Activated CD8-positive, alpha-beta T cell treated with anti-CD3 and anti-CD28 coated beads for 36 hours (primary cell): ENCODE measurements at regions of chr12 and their contacts with region 1.

Region 1: GRCh38 chr12:6825398-6826124 is 2.6 kb upstream of the P3H3 start:
- DNase-seq: peak; percentile 89
- ATAC-seq: peak; percentile 70
- H3K4me3 Mint-ChIP-seq: no peak overlapping the region
- H3K27ac Mint-ChIP-seq: no peak overlapping the region
- H3K4me1 Mint-ChIP-seq: peaks cover 30% of the 10 kb centered on the region
- H3K27me3 Mint-ChIP-seq: peaks cover 70% of the 10 kb centered on the region
- CTCF ChIP-seq: peak; percentile 93

Region 2: GRCh38 chr12:6745741-6746525 is 79.6 kb before region 1 on chr12:
- CTCF ChIA-PET with region 1: interaction called, 341 read pairs
- POLR2A ChIA-PET with region 1: interaction called, 4 read pairs
- intact Hi-C with region 1: loop called (anchors 5 kb)
- DNase-seq: peak; percentile 47
- ATAC-seq: peak; percentile 86
- H3K4me3 Mint-ChIP-seq: no peak overlapping the region
- H3K27ac Mint-ChIP-seq: peak overlapping the region; percentile 90
- H3K4me1 Mint-ChIP-seq: peaks cover 38% of the 10 kb centered on the region
- H3K27me3 Mint-ChIP-seq: no peaks in the 10 kb centered on the region
- CTCF ChIP-seq: no peak

Region 3: GRCh38 chr12:6778574-6779550 is 46.7 kb before region 1 on chr12:
- CTCF ChIA-PET with region 1: interaction called, 26 read pairs
- POLR2A ChIA-PET with region 1: interaction called, 4 read pairs
- intact Hi-C with region 1: loop called (anchors 5 kb)
- DNase-seq: peak; percentile 96
- ATAC-seq: peak; percentile 54
- H3K4me3 Mint-ChIP-seq: peak overlapping the region; percentile 89
- H3K27ac Mint-ChIP-seq: peak overlapping the region; percentile 89
- H3K4me1 Mint-ChIP-seq: peaks cover 83% of the 10 kb centered on the region
- H3K27me3 Mint-ChIP-seq: no peaks in the 10 kb centered on the region
- CTCF ChIP-seq: peak; percentile 89

Region 4: DNA sequence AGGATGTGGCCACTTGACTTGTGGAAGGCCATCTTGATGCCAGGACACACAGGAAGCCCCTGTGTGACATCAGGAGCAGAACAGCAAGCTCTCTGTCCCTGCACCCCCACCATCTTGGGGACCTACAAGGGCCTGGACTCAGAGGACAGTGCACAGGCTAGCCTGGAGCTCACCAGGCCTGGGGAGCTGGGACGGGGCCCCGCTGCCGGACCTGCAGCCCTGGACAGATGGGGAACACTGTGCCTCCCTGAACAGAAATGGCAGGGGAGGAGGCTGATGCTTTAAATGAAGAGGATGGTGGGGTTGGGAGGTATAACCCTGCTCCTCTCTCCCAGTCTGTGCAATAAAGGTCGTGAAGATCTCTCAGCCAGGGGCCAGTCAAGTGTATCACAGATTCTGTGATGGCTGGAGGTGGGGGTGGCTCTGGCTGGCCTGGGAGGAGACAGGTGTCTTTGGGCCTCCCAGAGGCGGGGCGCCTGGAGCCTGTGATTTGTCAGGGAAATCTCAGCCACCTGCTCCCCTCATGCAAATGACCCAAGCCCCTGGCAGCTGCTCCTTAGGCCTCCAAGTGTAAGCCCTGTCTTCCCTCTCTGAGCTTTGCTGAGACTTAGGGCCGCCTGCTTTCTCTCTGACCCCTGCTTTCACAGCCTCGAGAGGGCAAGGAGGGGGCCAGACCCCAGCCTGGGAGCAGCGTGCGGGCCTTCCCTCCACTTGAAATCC is 14.1 kb after region 1 on chr12:
- CTCF ChIA-PET with region 1: interaction called, 40 read pairs
- POLR2A ChIA-PET with region 1: interaction called, 4 read pairs
- intact Hi-C with region 1: no loop called
- DNase-seq: no peak
- ATAC-seq: no peak
- H3K4me3 Mint-ChIP-seq: no peak overlapping the region
- H3K27ac Mint-ChIP-seq: no peak overlapping the region
- H3K4me1 Mint-ChIP-seq: peaks cover 5% of the 10 kb centered on the region
- H3K27me3 Mint-ChIP-seq: no peaks in the 10 kb centered on the region
- CTCF ChIP-seq: no peak

Region 5: DNA sequence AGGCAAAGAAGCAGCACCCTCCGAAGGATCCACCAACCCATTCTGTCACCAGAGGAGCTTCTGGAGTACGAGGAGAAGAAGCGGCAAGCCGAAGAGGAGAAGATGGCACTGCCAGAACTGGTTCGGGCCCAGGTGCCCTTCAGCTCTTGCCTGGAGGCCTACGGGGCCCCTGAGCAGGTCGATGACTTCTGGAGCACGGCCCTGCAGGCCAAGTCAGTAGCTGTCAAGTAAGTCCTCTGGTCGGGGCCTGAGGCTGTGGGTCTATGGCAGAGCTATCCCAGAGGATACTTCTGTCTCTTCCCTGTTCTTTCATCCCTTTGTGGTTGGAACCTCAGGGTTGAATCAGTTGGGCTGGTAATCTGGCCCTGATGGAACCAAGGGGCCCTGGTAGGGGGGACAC is 35.8 kb after region 1 on chr12:
- CTCF ChIA-PET with region 1: no interaction called
- POLR2A ChIA-PET with region 1: no interaction called
- intact Hi-C with region 1: no loop called
- DNase-seq: no peak
- ATAC-seq: no peak
- H3K4me3 Mint-ChIP-seq: no peak overlapping the region
- H3K27ac Mint-ChIP-seq: no peak overlapping the region
- H3K4me1 Mint-ChIP-seq: peaks cover 10% of the 10 kb centered on the region
- H3K27me3 Mint-ChIP-seq: no peaks in the 10 kb centered on the region
- CTCF ChIP-seq: no peak